ENCODE measurements at regions of chr15 and their contacts with region 1.

Region 1: DNA sequence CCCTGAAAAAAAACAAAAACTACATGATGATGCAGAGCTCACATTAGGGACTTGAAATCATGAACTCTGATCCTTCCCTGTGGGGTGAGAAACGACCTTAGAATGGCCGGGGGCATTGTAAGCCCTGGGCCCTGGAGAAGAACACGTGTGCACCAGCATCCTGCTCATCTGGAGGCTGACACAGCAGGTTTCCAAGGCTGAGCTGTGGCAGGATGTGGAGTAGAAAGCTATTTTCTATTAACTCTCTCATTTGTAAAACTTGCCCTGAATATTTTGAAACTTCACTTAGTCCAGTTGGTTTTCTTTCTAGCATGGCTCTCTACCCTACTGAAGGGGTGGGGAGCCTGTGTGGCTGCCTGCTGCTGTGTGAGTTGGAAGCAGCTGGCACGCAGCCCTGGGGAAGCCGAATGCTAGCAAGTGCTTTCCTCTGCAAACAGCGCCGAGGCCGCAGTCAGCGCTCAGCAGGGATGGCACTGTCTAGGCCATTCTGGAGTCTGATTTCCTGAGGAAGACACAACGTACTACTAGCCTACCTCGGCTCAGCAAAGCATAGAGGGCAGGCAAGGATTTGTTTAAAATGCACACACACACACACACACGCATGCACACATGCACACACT is 58.0 kb downstream of the GABRG3 start:
- DNase-seq: no peak
- ATAC-seq: no peak
- H3K4me3 ChIP-seq: no peak overlapping the region
- H3K27ac ChIP-seq: no peak overlapping the region
- H3K4me1 ChIP-seq: no peaks in the 10 kb centered on the region
- H3K27me3 ChIP-seq: no peaks in the 10 kb centered on the region
- CTCF ChIP-seq: no peak

Region 2: DNA sequence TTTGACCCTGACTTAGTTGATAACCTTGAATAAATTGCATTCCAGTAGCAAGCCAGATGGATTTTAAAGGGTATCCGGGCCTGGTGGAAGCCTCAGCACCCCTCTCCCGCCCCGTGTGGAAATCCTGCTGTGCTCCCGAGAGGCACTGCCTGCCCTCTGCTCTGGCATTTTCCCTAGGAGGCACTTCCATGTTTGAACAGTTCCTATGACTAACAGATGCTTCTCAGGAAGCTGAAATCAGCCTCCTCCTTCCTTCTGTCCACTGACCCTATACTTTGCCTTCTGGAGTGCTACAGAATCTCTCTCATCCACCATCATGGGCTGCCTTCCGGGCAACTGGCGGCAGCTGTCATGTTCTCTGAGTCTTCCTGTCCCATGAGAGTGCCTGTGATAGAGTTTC is 32.8 kb after region 1 on chr15:
- intact Hi-C with region 1: loop called in 1 of 2 experiments (anchors 1 kb)
- DNase-seq: no peak
- ATAC-seq: no peak
- H3K4me3 ChIP-seq: no peak overlapping the region
- H3K27ac ChIP-seq: no peak overlapping the region
- H3K4me1 ChIP-seq: no peaks in the 10 kb centered on the region
- H3K27me3 ChIP-seq: no peaks in the 10 kb centered on the region
- CTCF ChIP-seq: no peak